Activated T-helper 1 cell treated with anti-CD3 and anti-CD28 coated beads, Interleukin-12 subunit alpha, Interleukin-12 subunit beta, Interleukin-2, Interleukin-4 antibody, amounts not matched to agents 30 ng/mL and 10 ng/mL and 1 ng/mL, durations not matched to agents 14 hours and 24 hours and 36 hours (primary cell): ENCODE measurements at regions of chr5 and their contacts with region 1.

Region 1: DNA sequence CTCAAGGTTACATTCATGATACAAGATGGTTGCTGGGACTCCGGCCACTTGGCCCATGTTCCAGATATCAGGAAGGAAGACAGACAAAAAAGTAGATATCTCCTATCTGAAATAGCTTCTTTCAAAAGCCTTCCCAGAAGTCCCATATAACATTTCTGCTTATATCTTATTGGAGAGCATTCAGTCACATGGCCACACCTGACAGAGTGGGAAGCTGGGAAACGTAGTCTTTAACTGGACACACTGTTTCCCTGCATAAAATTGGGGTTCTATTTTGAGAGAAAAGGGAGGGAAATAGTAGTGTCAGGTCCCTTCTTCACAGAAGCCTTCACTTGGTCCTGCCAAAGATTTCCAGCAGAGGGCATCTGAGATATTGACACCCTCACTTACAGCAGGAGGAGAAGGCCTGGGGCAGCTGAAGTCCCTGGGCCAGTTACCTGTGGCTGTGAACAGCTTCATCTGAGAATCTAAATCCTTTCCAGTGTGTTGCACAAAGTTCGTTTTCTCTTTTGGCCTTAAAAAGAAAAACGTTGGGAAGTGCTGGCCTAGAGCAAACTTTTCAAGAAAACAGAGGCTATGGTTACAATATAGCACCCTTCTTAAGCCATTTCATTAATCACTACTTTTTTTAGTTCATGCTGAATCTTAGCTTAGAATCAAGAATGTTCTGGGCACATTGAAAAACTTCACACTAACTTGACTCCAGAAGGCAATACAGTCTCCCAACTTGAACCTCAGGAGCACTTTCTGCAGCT is 33.5 kb downstream of the SPEF2 start:
- DNase-seq: peak; percentile 50
- H3K4me3 Mint-ChIP-seq: no peak overlapping the region
- H3K27ac Mint-ChIP-seq: no peak overlapping the region
- H3K4me1 Mint-ChIP-seq: peaks cover 5% of the 10 kb centered on the region
- H3K27me3 Mint-ChIP-seq: no peaks in the 10 kb centered on the region

Region 2: GRCh38 chr5:35313291-35313690 is 337.9 kb before region 1 on chr5:
- intact Hi-C with region 1: no loop called
- DNase-seq: no peak
- H3K4me3 Mint-ChIP-seq: no peak overlapping the region
- H3K27ac Mint-ChIP-seq: no peak overlapping the region
- H3K4me1 Mint-ChIP-seq: no peaks in the 10 kb centered on the region
- H3K27me3 Mint-ChIP-seq: no peaks in the 10 kb centered on the region

Region 3: DNA sequence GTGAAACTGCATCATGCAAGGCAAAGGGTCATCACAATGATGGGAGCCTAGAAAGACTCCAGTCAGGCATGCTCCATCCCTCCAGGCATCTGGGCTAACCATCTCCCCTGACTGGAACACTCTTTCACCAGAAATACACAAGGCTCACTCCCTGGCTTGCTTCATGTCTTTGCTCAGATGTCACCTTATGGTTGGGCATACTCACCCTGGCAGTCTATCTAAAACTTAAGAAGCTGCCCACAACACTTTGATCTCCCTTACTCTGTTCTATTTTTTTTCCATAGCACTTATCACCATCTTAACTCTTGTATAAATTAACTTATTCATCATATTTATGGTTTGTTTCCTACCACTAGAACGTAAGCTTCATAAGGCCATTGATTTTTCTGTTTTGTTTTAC is 56.5 kb after region 1 on chr5:
- intact Hi-C with region 1: loop called (anchors 2 kb)
- DNase-seq: no peak
- H3K4me3 Mint-ChIP-seq: no peak overlapping the region
- H3K27ac Mint-ChIP-seq: no peak overlapping the region
- H3K4me1 Mint-ChIP-seq: no peaks in the 10 kb centered on the region
- H3K27me3 Mint-ChIP-seq: no peaks in the 10 kb centered on the region